Naive thymus-derived CD4-positive, alpha-beta T cell (primary cell): ENCODE measurements at regions of chr9 and their contacts with region 1.

Region 1: DNA sequence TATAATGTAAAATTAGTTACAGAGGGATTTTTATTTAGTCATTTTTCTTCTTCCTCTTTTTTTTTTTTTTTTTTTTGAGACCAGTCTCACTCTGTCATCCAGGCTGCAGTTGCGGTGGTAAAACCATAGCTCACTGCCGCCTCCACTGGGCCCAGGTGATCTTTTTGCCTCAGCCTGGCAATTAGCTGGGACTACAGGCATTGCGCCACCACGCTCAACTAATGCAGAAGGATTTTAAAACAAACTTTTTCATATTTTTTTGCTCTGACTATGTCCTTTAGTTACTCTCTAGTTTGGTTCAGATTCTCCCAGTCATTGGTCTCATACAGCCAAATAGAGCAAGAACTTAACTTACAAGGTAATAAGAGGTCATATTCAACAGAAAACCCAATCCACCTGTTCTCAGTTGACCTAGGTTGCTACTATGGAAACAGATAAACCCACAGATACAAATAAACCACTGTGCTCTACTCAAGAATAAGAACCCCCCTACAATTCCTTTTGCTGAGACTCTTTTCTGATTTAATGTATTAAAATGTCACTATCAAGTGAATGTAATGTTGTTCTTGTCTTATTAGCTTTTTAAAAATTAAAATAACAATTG is 50.1 kb upstream of the TTC39B start:
- DNase-seq: peak in 8 of 9 donors; percentile 14 to 64 (median 46)
- ATAC-seq: peak; percentile 80
- H3K4me3 ChIP-seq: no peak overlapping the region
- H3K4me3 Mint-ChIP-seq: peak overlapping the region in 2 of 10 donors; percentile 11 to 49
- H3K27ac ChIP-seq: no peak overlapping the region
- H3K27ac Mint-ChIP-seq: peak overlapping the region in 5 of 9 donors; percentile 43 to 67 (median 48)
- H3K4me1 ChIP-seq: peaks cover 0 to 13% of the 10 kb centered on the region in 2 donors
- H3K4me1 Mint-ChIP-seq: peaks cover 12 to 41% (median 34%) of the 10 kb centered on the region in 7 donors
- H3K27me3 ChIP-seq: no peaks in the 10 kb centered on the region
- H3K27me3 Mint-ChIP-seq: no peaks in the 10 kb centered on the region

Region 2: DNA sequence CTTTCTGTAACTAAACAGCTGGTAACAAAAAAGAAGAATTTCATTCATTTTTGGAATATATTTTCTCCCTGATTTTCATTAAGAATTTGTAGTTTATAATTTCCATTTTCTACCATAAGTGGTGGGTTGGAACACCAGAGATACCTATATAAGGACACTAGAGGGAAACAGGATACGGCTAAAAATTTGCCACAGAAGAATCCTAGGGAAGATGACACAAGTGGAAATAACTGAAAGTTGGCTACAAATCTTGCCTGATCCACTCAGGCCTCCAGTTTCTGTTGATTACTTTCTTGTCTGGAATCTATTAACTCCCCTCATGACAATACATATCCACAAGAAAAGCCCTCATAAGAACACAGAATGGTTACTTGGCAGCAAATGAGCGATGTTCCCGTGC is 493.8 kb before region 1 on chr9:
- CTCF ChIA-PET with region 1: no interaction called
- POLR2A ChIA-PET with region 1: no interaction called
- intact Hi-C with region 1: no loop called
- DNase-seq: no peak
- ATAC-seq: no peak
- H3K4me3 ChIP-seq: no peak overlapping the region
- H3K4me3 Mint-ChIP-seq: no peak overlapping the region
- H3K27ac ChIP-seq: no peak overlapping the region
- H3K27ac Mint-ChIP-seq: no peak overlapping the region
- H3K4me1 ChIP-seq: no peaks in the 10 kb centered on the region
- H3K4me1 Mint-ChIP-seq: no peaks in the 10 kb centered on the region
- H3K27me3 ChIP-seq: no peaks in the 10 kb centered on the region
- H3K27me3 Mint-ChIP-seq: peaks cover 0 to 4% (median 0%) of the 10 kb centered on the region in 5 donors

Region 3: GRCh38 chr9:15262581-15262980 is 94.6 kb before region 1 on chr9:
- CTCF ChIA-PET with region 1: interaction called, 3 read pairs
- POLR2A ChIA-PET with region 1: no interaction called
- intact Hi-C with region 1: loop called in 1 of 2 experiments (anchors 5 kb)
- DNase-seq: no peak
- ATAC-seq: no peak
- H3K4me3 ChIP-seq: no peak overlapping the region
- H3K4me3 Mint-ChIP-seq: no peak overlapping the region
- H3K27ac ChIP-seq: no peak overlapping the region
- H3K27ac Mint-ChIP-seq: peak overlapping the region in 2 of 9 donors; percentile 15 to 49
- H3K4me1 ChIP-seq: no peaks in the 10 kb centered on the region
- H3K4me1 Mint-ChIP-seq: peaks cover 8 to 50% (median 26%) of the 10 kb centered on the region in 7 donors
- H3K27me3 ChIP-seq: no peaks in the 10 kb centered on the region
- H3K27me3 Mint-ChIP-seq: no peaks in the 10 kb centered on the region

Region 4: DNA sequence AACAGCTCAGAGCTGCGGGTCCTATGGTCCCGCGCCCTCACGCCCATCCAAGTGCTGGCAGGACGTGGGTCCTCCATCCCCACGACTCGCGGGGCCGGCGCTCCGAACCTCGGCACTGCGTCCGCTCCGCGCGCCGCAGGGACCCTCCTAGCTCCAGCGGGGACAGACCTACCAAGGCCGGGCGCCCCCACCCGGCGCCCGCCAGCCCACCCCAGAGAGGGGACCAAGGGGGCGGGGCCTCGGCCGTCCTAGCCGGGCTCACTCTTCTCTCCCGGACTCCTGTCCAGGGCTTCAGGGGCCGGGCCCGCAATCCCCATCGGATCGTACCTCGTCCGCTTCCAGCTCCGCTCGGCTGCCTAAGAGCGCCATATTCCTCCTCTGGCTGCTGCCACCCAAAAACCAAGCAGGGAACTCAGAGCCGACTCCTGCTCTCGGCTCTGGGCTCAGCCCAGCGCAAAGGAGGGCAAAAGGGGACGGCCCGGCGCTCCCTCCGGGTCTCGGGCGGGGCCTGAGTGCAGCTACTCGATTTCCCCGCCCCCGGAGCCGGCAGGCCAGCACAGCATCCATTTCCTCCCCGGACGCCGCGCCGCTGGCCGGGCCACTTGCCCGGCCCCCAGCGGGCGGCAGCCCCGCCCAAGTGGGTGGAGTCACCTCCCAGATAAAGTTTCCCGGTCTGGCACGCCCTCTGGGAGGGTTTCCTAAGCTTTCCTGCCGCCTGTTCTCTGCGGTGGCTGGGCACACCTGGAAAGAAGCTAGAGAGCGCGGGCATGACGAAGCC is 50.2 kb before region 1 on chr9 and contains the start of gene TTC39B:
- CTCF ChIA-PET with region 1: interaction called, 3 read pairs
- POLR2A ChIA-PET with region 1: interaction called, 3 read pairs
- intact Hi-C with region 1: loop called (anchors 1 to 2 kb)
- DNase-seq: peak; percentile 34 to 88 (median 53)
- ATAC-seq: peak; percentile 87
- H3K4me3 ChIP-seq: peak within 1 kb of the TSS; percentile 86
- H3K4me3 Mint-ChIP-seq: peak within 1 kb of the TSS; percentile 89 to 99 (median 97)
- H3K27ac ChIP-seq: peak within 1 kb of the TSS; percentile 81
- H3K27ac Mint-ChIP-seq: peak within 1 kb of the TSS; percentile 84 to 97 (median 95)
- H3K4me1 ChIP-seq: peaks cover 25 to 44% of the 10 kb centered on the region in 2 donors
- H3K4me1 Mint-ChIP-seq: peaks cover 37 to 66% (median 61%) of the 10 kb centered on the region in 7 donors
- H3K27me3 ChIP-seq: no peaks in the 10 kb centered on the region
- H3K27me3 Mint-ChIP-seq: no peaks in the 10 kb centered on the region
- total RNA-seq, gene TTC39B: 29.1 to 49.3 (median 42.8) TPM

Region 5: GRCh38 chr9:15422372-15423230 is 65.4 kb after region 1 on chr9 and contains the start of gene SNAPC3:
- CTCF ChIA-PET with region 1: interaction called, 3 read pairs
- POLR2A ChIA-PET with region 1: no interaction called
- intact Hi-C with region 1: loop called (anchors 1 to 2 kb)
- DNase-seq: peak; percentile 86 to 96 (median 93)
- ATAC-seq: peak; percentile 99
- H3K4me3 ChIP-seq: peak within 1 kb of the TSS; percentile 90
- H3K4me3 Mint-ChIP-seq: peak within 1 kb of the TSS; percentile 89 to 95 (median 92)
- H3K27ac ChIP-seq: peak within 1 kb of the TSS; percentile 74
- H3K27ac Mint-ChIP-seq: peak within 1 kb of the TSS; percentile 89 to 96 (median 93)
- H3K4me1 ChIP-seq: peaks cover 0 to 8% of the 10 kb centered on the region in 2 donors
- H3K4me1 Mint-ChIP-seq: peaks cover 20 to 47% (median 45%) of the 10 kb centered on the region in 7 donors
- H3K27me3 ChIP-seq: no peaks in the 10 kb centered on the region
- H3K27me3 Mint-ChIP-seq: no peaks in the 10 kb centered on the region
- total RNA-seq, gene SNAPC3: 11.9 to 44.4 (median 33.5) TPM

Region 6: DNA sequence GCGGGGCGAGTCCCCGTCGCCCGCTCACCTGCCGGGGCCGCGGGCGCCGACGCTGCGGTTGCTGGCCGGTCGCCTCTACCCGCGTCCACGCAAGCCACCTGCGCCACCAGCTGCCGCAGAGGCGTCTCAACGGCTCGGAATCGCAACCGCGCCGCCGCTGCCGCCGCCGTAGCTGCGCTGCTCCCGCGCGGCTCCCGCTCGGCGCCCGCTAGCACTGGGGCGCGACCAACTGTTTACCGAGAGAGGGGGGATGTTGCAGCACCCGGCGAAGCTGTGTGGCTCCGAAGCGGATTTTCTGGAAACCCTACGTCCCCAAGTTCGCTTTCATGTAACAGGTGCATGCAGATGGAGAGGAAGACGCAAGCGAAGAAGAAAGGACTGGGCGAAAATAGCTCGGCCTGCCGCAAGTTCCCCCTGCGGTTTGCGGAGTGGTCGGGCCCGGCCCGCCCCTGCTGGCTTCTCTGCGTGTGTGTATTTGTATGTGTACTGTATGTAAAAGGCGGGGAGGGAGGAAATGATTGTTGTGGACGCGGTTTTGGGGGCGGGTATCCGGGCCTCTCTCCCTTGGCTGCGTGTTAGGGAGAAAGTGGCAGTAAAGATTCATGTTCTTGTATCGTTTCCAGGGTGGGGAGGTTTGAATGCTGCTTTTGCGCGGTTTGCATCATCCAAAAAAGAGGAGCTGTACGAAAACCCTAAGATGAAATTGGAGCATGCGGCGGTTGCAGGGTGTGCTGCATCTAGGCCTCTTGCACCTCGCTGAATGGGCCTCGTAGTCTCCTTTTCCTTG is 153.8 kb after region 1 on chr9 and contains the start of gene PSIP1:
- CTCF ChIA-PET with region 1: interaction called, 3 read pairs
- POLR2A ChIA-PET with region 1: interaction called, 4 read pairs
- intact Hi-C with region 1: loop called in 1 of 2 experiments (anchors 10 kb)
- DNase-seq: peak; percentile 82 to 96 (median 94)
- ATAC-seq: peak; percentile 91
- H3K4me3 ChIP-seq: peak within 1 kb of the TSS; percentile 88
- H3K4me3 Mint-ChIP-seq: peak within 1 kb of the TSS; percentile 90 to 99 (median 95)
- H3K27ac ChIP-seq: peak within 1 kb of the TSS; percentile 88
- H3K27ac Mint-ChIP-seq: peak within 1 kb of the TSS; percentile 96 to 100 (median 99)
- H3K4me1 ChIP-seq: peaks cover 19 to 39% of the 10 kb centered on the region in 2 donors
- H3K4me1 Mint-ChIP-seq: peaks cover 44 to 82% (median 66%) of the 10 kb centered on the region in 7 donors
- H3K27me3 ChIP-seq: no peaks in the 10 kb centered on the region
- H3K27me3 Mint-ChIP-seq: no peaks in the 10 kb centered on the region
- total RNA-seq, gene PSIP1: 97.8 to 213 (median 120) TPM

Region 7: GRCh38 chr9:15552636-15553527 is 195.7 kb after region 1 on chr9 and contains the start of gene CCDC171:
- CTCF ChIA-PET with region 1: no interaction called
- POLR2A ChIA-PET with region 1: no interaction called
- intact Hi-C with region 1: loop called in 1 of 2 experiments (anchors 1 kb)
- DNase-seq: peak; percentile 80 to 89 (median 85)
- ATAC-seq: peak; percentile 92
- H3K4me3 ChIP-seq: peak within 1 kb of the TSS; percentile 65
- H3K4me3 Mint-ChIP-seq: peak within 1 kb of the TSS; percentile 88 to 97 (median 94)
- H3K27ac ChIP-seq: peak within 1 kb of the TSS; percentile 66
- H3K27ac Mint-ChIP-seq: peak within 1 kb of the TSS; percentile 73 to 93 (median 86)
- H3K4me1 ChIP-seq: peaks cover 0 to 11% of the 10 kb centered on the region in 2 donors
- H3K4me1 Mint-ChIP-seq: peaks cover 0 to 23% (median 12%) of the 10 kb centered on the region in 7 donors
- H3K27me3 ChIP-seq: no peaks in the 10 kb centered on the region
- H3K27me3 Mint-ChIP-seq: peaks cover 0 to 39% (median 0%) of the 10 kb centered on the region in 5 donors
- total RNA-seq, gene CCDC171: 0.77 to 3.7 (median 2.7) TPM